ENCODE measurements at regions of chr11 and their contacts with region 1.

Region 1: DNA sequence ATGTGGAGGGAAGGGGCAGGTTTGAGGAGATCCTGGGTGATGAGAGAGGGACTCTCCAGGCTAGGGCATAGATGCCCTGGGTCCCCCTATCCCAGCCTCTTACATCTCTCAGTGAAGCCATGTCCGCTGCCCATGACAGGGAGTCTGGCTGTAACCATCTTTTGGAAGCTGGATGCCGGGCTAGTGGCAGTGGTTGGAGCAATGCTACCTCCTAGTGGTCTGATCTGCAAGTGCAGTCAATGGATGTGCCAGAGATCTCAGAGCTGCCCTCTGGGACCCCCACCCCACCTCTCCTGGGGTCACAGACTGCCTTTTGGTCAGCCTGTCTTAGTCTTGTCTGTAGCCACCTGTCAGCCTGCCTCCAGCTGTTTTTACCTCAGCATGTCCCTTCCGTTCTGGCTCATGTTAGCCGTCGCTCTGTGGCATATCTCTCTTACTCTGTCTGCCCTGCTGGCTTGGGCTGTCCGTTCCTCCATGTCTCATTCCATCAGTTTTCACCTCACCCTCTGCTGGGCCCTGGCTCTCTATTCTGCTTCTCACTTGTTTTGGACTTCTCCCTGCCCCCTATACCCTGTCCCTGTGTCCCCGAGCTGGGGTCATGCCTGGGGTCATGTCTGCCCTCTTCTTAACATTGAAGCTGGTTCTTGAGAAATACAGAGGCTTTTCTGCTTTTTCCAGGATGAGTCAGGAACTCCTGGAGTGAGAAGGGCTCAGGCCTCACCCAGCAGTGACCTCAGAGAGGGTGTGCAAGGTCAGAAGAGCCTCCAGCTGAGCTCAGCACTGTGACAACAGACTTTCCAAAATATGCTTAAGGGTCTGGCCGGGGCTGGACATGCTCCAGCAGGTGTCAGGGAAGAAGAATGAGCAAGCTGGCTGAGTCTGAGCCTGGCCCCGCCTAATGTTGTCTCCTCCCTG is 52.0 kb upstream of the THY1 start:
- DNase-seq: no peak
- ATAC-seq: peak; percentile 78
- H3K4me3 ChIP-seq: no peak overlapping the region
- H3K27ac ChIP-seq: no peak overlapping the region
- H3K4me1 ChIP-seq: peaks cover 0 to 25% of the 10 kb centered on the region in 2 experiments; a peak in 1 of 4 replicates
- H3K27me3 ChIP-seq: no peaks in the 10 kb centered on the region
- CTCF ChIP-seq: peak; percentile 80 to 91 (median 88)
- POLR2A ChIP-seq: no peak
- RAD21 ChIP-seq: peak; percentile 90

Region 2: DNA sequence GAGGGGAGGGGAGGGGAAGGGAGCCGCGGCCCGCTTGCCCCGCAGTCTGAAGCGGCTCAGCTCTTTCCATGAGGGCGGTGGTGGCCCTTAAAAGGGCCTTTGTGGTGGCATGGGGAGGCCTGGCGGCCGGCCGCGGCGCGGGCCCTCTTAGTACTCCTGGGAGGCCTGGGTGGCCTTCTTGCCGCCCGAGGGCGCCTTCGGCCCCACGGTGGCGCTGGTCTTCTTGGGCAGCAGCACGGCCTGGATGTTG is 380.2 kb before region 1 on chr11:
- CTCF ChIA-PET with region 1: no interaction called
- POLR2A ChIA-PET with region 1: no interaction called
- RAD21 ChIA-PET with region 1: no interaction called
- intact Hi-C with region 1: no loop called
- DNase-seq: no peak
- ATAC-seq: peak; percentile 54
- H3K4me3 ChIP-seq: peak overlapping the region; percentile 83 to 97
- H3K27ac ChIP-seq: peak overlapping the region; percentile 93
- H3K4me1 ChIP-seq: peaks cover 13 to 24% of the 10 kb centered on the region in 2 experiments
- H3K27me3 ChIP-seq: no peaks in the 10 kb centered on the region
- CTCF ChIP-seq: peak in 2 of 3 experiments; percentile 52 to 59; a peak in 4 of 6 replicates
- POLR2A ChIP-seq: no peak
- RAD21 ChIP-seq: no peak

Region 3: GRCh38 chr11:119205574-119206510 is 269.1 kb before region 1 on chr11 and contains the start of gene CBL:
- CTCF ChIA-PET with region 1: no interaction called
- POLR2A ChIA-PET with region 1: no interaction called
- RAD21 ChIA-PET with region 1: no interaction called
- intact Hi-C with region 1: loop called (anchors 5 kb)
- DNase-seq: peak; percentile 78
- ATAC-seq: peak; percentile 88
- H3K4me3 ChIP-seq: peak within 1 kb of the TSS; percentile 72 to 96
- H3K27ac ChIP-seq: peak within 1 kb of the TSS; percentile 80
- H3K4me1 ChIP-seq: peaks cover 10 to 16% of the 10 kb centered on the region in 2 experiments
- H3K27me3 ChIP-seq: no peaks in the 10 kb centered on the region
- CTCF ChIP-seq: peak; percentile 69 to 88 (median 85)
- POLR2A ChIP-seq: peak; percentile 21
- RAD21 ChIP-seq: peak; percentile 47
- total RNA-seq, gene CBL: 31.1 TPM